Activated B cell treated with CpG ODN at 0.5 μM for 24 hours (primary cell): ENCODE measurements at regions of chr18 and their contacts with region 1.

Region 1: DNA sequence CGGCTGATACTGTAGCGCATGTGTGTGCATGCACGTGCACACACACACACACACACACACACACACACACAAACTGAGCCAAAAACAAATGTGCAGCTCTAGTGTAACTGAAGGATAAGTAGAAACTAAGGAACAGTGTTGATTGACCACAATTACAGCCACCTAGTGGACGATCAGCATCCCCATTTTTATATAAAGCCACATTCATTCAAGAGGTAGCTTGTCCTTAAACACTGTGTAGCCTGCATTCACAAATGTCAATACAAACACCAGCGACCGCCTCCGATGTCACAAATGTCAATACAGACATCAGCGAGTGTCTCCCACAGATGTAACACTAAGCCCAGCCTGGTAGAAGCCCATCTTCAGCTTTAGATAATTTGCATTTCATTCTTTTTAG is 167.4 kb downstream of the PTGR3 start:
- DNase-seq: no peak
- ATAC-seq: no peak
- H3K4me3 Mint-ChIP-seq: no peak overlapping the region
- H3K27ac Mint-ChIP-seq: no peak overlapping the region
- H3K4me1 Mint-ChIP-seq: no peaks in the 10 kb centered on the region
- H3K27me3 Mint-ChIP-seq: no peaks in the 10 kb centered on the region
- CTCF ChIP-seq: no peak

Region 2: DNA sequence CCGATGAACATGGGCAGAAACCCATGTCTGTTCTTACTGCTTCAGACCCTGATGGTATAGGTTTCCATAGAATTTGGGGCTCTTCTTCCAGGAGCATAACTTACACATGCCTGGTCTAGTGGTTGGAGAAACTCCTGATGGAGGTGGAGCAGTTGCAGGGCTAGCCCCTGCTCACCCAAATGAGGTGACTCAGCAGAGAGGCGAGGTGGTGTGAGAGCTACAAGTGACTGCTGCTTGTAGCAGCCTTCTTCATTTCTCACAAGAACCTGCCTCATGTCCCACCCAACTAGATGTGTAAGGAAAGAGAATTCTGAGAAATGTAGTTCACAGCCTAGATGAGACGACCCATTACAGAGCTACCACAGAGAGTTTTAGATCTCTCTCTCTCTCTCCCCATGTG is 338.6 kb before region 1 on chr18:
- CTCF ChIA-PET with region 1: no interaction called
- POLR2A ChIA-PET with region 1: interaction called, 16 read pairs
- intact Hi-C with region 1: no loop called
- DNase-seq: no peak
- ATAC-seq: no peak
- H3K4me3 Mint-ChIP-seq: no peak overlapping the region
- H3K27ac Mint-ChIP-seq: no peak overlapping the region
- H3K4me1 Mint-ChIP-seq: no peaks in the 10 kb centered on the region
- H3K27me3 Mint-ChIP-seq: no peaks in the 10 kb centered on the region
- CTCF ChIP-seq: no peak

Region 3: GRCh38 chr18:75530566-75531211 is 489.1 kb after region 1 on chr18:
- CTCF ChIA-PET with region 1: no interaction called
- POLR2A ChIA-PET with region 1: no interaction called
- intact Hi-C with region 1: no loop called
- DNase-seq: no peak
- ATAC-seq: no peak
- H3K4me3 Mint-ChIP-seq: no peak overlapping the region
- H3K27ac Mint-ChIP-seq: no peak overlapping the region
- H3K4me1 Mint-ChIP-seq: no peaks in the 10 kb centered on the region
- H3K27me3 Mint-ChIP-seq: no peaks in the 10 kb centered on the region
- CTCF ChIP-seq: no peak

Region 4: DNA sequence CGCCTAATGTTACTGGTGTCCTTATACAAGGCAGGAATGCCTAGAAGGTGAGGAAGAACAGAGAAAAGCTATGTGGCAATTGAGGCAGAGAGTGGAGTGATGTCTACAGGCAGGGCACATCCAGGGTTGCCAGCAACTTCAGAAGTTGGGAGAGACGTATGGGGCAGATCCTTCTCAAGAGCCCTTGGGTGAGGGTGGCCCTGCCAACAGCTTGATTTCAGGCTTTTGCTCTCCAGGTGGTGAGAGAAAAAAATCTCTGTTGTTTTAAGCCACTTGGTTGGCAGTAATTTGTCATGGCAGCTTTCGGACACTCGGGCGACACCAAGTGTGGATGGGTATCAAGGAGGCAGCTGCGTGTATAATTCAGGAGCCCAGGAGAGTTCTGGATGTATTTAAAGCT is 603.3 kb after region 1 on chr18:
- CTCF ChIA-PET with region 1: no interaction called
- POLR2A ChIA-PET with region 1: no interaction called
- intact Hi-C with region 1: no loop called
- DNase-seq: no peak
- ATAC-seq: no peak
- H3K4me3 Mint-ChIP-seq: no peak overlapping the region
- H3K27ac Mint-ChIP-seq: no peak overlapping the region
- H3K4me1 Mint-ChIP-seq: no peaks in the 10 kb centered on the region
- H3K27me3 Mint-ChIP-seq: no peaks in the 10 kb centered on the region
- CTCF ChIP-seq: no peak